PC-9 (cell line): ENCODE measurements at regions of chr1 and their contacts with region 1.

Region 1: DNA sequence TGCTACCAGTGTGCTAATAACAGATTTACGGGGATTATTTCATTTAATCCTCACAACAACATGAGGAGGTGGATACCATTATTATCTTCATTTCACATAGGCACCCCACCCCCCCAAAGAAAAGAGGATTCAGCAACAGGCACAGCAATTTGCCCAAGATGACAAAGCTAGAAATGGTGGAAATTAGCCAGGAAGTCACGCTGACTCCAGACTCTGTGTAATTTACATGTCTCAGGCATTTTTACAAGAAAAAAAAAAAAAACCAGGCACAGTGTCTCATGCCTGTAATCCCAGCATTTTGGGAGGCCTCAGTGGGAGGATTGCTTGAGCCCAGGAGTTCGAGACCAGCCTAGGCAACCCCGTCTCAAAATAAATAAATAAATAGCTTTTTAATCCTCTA is 37.5 kb upstream of the PRDM2 start:
- DNase-seq: no peak
- H3K4me3 ChIP-seq: no peak overlapping the region
- H3K27ac ChIP-seq: no peak overlapping the region
- H3K4me1 ChIP-seq: no peaks in the 10 kb centered on the region
- H3K27me3 ChIP-seq: peaks cover 13% of the 10 kb centered on the region
- CTCF ChIP-seq: no peak

Region 2: DNA sequence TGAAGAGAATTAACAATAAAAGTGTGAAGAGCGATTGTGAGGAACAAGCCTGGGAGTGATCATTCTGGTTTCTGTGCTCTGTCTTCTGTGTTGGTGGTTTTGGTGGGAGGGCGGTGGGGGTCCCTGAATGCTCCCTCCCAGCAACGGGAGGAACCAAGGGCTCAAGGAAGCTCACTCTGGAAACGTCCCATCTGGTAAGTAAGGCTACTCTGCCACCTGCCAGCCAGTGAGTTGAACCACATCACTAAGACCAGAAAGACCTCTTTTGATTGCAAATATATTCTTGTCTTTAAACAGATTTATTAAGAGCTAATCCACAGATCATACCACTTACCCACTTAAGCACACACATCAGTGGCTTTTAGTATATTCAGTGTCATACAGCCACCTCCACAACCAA is 162.5 kb after region 1 on chr1:
- CTCF ChIA-PET with region 1: no interaction called
- POLR2A ChIA-PET with region 1: no interaction called
- intact Hi-C with region 1: loop called (anchors 1 kb)
- DNase-seq: no peak
- H3K4me3 ChIP-seq: no peak overlapping the region
- H3K27ac ChIP-seq: no peak overlapping the region
- H3K4me1 ChIP-seq: no peaks in the 10 kb centered on the region
- H3K27me3 ChIP-seq: no peaks in the 10 kb centered on the region
- CTCF ChIP-seq: 0 out of 2 replicates have a peak, but pooled peaks have one; percentile 25